PC-9 (cell line): ENCODE measurements at regions of chr6 and their contacts with region 1.

Region 1: GRCh38 chr6:99790679-99791078 is 184.0 kb downstream of the PRDM13 start:
- DNase-seq: no peak
- H3K4me3 ChIP-seq: no peak overlapping the region
- H3K27ac ChIP-seq: no peak overlapping the region
- H3K4me1 ChIP-seq: no peaks in the 10 kb centered on the region
- H3K27me3 ChIP-seq: no peaks in the 10 kb centered on the region
- CTCF ChIP-seq: peak; percentile 63

Region 2: GRCh38 chr6:99530627-99531026 is 260.1 kb before region 1 on chr6:
- CTCF ChIA-PET with region 1: interaction called, 10 read pairs
- POLR2A ChIA-PET with region 1: no interaction called
- intact Hi-C with region 1: no loop called
- DNase-seq: no peak
- H3K4me3 ChIP-seq: no peak overlapping the region
- H3K27ac ChIP-seq: no peak overlapping the region
- H3K4me1 ChIP-seq: no peaks in the 10 kb centered on the region
- H3K27me3 ChIP-seq: no peaks in the 10 kb centered on the region
- CTCF ChIP-seq: no peak

Region 3: DNA sequence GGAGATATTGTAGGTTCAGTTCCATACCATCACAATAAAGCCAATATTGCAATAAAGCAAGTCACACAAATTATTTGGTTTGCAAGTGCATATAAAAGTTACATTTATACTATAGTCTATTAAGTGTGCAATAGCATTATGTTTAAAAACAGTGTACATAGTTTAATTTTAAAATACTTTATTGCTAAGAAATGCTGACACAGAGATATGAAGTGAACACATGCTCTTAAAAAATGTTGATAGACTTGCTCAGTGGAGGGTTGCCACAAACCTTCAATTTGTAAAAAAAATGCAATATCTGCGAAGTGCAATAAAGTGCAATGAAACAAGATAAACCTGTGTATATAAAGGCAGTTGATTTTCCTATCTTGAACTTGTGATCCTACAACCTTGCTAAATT is 22.5 kb before region 1 on chr6:
- CTCF ChIA-PET with region 1: no interaction called
- POLR2A ChIA-PET with region 1: no interaction called
- intact Hi-C with region 1: no loop called
- DNase-seq: no peak
- H3K4me3 ChIP-seq: no peak overlapping the region
- H3K27ac ChIP-seq: no peak overlapping the region
- H3K4me1 ChIP-seq: no peaks in the 10 kb centered on the region
- H3K27me3 ChIP-seq: no peaks in the 10 kb centered on the region
- CTCF ChIP-seq: no peak